Activated T-helper 2 cell treated with anti-CD3 and anti-CD28 coated beads, Interferon-gamma antibody, Interleukin-2, Interleukin-4, amounts not matched to agents 10 μg/mL and 5 μg/mL and 100 μg/mL, durations not matched to agents 14 hours and 24 hours and 36 hours (primary cell): ENCODE measurements at regions of chr11 and their contacts with region 1.

Region 1: GRCh38 chr11:125141686-125142535 is 22.6 kb upstream of the PKNOX2 start:
- DNase-seq: peak; percentile 24
- H3K4me3 Mint-ChIP-seq: no peak overlapping the region
- H3K27ac Mint-ChIP-seq: no peak overlapping the region
- H3K4me1 Mint-ChIP-seq: peaks cover 3% of the 10 kb centered on the region
- H3K27me3 Mint-ChIP-seq: peaks cover 30% of the 10 kb centered on the region

Region 2: GRCh38 chr11:124875943-124876817 is 265.7 kb before region 1 on chr11:
- intact Hi-C with region 1: loop called (anchors 5 kb)
- DNase-seq: peak; percentile 76
- H3K4me3 Mint-ChIP-seq: peak overlapping the region; percentile 82
- H3K27ac Mint-ChIP-seq: peak overlapping the region; percentile 86
- H3K4me1 Mint-ChIP-seq: peaks cover 12% of the 10 kb centered on the region
- H3K27me3 Mint-ChIP-seq: peaks cover 42% of the 10 kb centered on the region

Region 3: GRCh38 chr11:124961972-124962609 is 179.8 kb before region 1 on chr11:
- intact Hi-C with region 1: loop called (anchors 1 kb)
- DNase-seq: no peak
- H3K4me3 Mint-ChIP-seq: no peak overlapping the region
- H3K27ac Mint-ChIP-seq: no peak overlapping the region
- H3K4me1 Mint-ChIP-seq: peaks cover 7% of the 10 kb centered on the region
- H3K27me3 Mint-ChIP-seq: no peaks in the 10 kb centered on the region

Region 4: GRCh38 chr11:125091247-125091876 is 50.5 kb before region 1 on chr11:
- intact Hi-C with region 1: loop called (anchors 1 kb)
- DNase-seq: no peak
- H3K4me3 Mint-ChIP-seq: no peak overlapping the region
- H3K27ac Mint-ChIP-seq: no peak overlapping the region
- H3K4me1 Mint-ChIP-seq: peaks cover 3% of the 10 kb centered on the region
- H3K27me3 Mint-ChIP-seq: no peaks in the 10 kb centered on the region

Region 5: GRCh38 chr11:125263268-125263790 is 121.4 kb after region 1 on chr11:
- intact Hi-C with region 1: no loop called
- DNase-seq: no peak
- H3K4me3 Mint-ChIP-seq: no peak overlapping the region
- H3K27ac Mint-ChIP-seq: no peak overlapping the region
- H3K4me1 Mint-ChIP-seq: no peaks in the 10 kb centered on the region
- H3K27me3 Mint-ChIP-seq: peaks cover 24% of the 10 kb centered on the region